PC-3 (cell line): ENCODE measurements at regions of chr2 and their contacts with region 1.

Region 1: DNA sequence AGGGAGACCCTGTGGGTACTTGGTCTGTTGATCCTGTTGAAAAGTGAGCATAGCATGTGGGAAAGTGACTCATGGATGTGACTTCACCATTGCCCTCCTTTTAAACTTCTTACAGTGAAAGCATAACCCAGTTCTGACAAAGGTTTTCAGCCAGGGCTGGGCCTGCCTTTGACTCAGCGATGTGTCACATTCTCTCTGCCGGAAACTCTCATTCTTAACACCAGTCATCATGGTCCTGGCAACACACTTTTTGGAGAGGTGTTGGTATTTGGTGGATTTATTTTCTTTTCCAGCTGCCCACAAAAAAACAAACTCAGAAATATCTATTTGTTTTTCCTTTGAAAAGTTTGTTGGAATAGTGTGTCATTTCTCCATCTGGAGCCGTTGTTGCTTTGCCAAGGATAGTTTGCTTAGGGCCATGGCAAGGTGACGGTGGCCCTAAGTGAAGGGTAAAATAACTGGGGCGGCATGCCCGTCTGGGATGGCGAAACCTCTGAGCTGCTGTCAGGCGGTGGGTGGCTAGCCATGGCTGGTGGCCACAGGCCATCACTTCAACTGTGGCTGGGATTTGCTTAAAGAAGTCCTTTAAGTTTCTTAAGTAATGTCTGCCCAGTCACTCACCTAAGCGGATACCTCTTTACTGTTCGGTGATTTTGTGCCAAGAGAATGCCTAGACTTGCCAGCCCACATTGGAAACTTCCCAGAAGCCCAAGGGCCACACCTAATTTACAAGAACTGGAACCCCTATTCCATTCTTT is 123.3 kb downstream of the LTBP1 start:
- DNase-seq: peak; percentile 99
- ATAC-seq: peak; percentile 86
- H3K4me3 ChIP-seq: peak overlapping the region; percentile 19; the same call in 1 of the 2 replicates
- H3K27ac ChIP-seq: peak overlapping the region; percentile 98
- H3K4me1 ChIP-seq: peaks cover 62% of the 10 kb centered on the region
- H3K27me3 ChIP-seq: no peaks in the 10 kb centered on the region
- CTCF ChIP-seq: no peak

Region 2: GRCh38 chr2:33104726-33105125 is 34.7 kb after region 1 on chr2:
- CTCF ChIA-PET with region 1: no interaction called
- POLR2A ChIA-PET with region 1: no interaction called
- intact Hi-C with region 1: loop called (anchors 2 kb)
- DNase-seq: peak; percentile 66
- ATAC-seq: peak; percentile 47
- H3K4me3 ChIP-seq: peak overlapping the region; percentile 5; the same call in 1 of the 2 replicates
- H3K27ac ChIP-seq: peak overlapping the region; percentile 93
- H3K4me1 ChIP-seq: peaks cover 28% of the 10 kb centered on the region
- H3K27me3 ChIP-seq: no peaks in the 10 kb centered on the region
- CTCF ChIP-seq: no peak

Region 3: DNA sequence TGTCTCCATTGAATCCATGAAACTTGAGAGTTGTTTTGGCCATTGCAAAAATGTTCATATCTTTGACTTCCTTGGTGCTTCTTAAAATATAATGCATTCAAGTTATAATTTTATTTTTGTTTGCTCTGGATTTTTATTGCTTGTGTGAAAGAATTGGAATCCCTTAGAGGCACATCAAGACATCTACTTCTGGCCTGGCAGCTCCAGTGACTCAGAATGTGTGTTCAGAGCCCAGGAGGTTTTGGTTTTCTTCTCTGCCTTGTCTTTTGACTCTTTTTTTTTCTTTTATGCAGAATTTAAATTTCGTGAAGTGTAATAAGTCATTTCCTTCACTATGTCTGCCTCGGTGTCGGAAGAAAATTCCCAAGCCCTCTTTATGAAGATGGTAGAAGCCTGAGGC is 56.9 kb after region 1 on chr2:
- CTCF ChIA-PET with region 1: no interaction called
- POLR2A ChIA-PET with region 1: no interaction called
- intact Hi-C with region 1: no loop called
- DNase-seq: peak; percentile 82
- ATAC-seq: peak; percentile 88
- H3K4me3 ChIP-seq: peak overlapping the region; percentile 22; the same call in 1 of the 2 replicates
- H3K27ac ChIP-seq: peak overlapping the region; percentile 87
- H3K4me1 ChIP-seq: peaks cover 52% of the 10 kb centered on the region
- H3K27me3 ChIP-seq: no peaks in the 10 kb centered on the region
- CTCF ChIP-seq: no peak

Region 4: GRCh38 chr2:33153008-33153407 is 82.9 kb after region 1 on chr2:
- CTCF ChIA-PET with region 1: no interaction called
- POLR2A ChIA-PET with region 1: no interaction called
- intact Hi-C with region 1: loop called (anchors 5 kb)
- DNase-seq: peak; percentile 43
- ATAC-seq: no peak
- H3K4me3 ChIP-seq: no peak overlapping the region
- H3K27ac ChIP-seq: peak overlapping the region; percentile 61
- H3K4me1 ChIP-seq: peaks cover 29% of the 10 kb centered on the region
- H3K27me3 ChIP-seq: no peaks in the 10 kb centered on the region
- CTCF ChIP-seq: no peak